ENCODE measurements at regions of chr5 and their contacts with region 1.

Region 1: DNA sequence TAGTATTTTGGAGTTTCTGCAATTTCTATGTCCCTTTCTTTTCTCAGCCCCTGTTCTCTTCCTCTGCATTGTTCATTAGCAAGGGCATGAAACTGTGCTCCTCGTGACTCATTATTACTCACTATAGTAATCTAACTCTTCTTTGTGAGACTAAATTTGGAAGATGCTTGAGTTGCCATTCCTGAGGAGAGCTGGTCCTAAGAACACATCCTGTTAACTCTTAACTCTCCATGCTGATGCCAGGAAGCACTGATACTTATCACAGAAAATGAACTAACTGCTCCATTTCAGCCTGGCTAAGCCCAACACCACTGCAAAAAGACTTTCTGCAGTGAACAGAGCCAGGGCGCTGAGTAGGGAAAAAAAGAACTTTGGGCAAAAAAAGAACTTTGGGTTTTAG is 10.6 kb upstream of the CSNK1A1 start:
- DNase-seq: peak; percentile 97
- H3K4me3 Mint-ChIP-seq: peak overlapping the region; percentile 50
- H3K27ac Mint-ChIP-seq: peak overlapping the region; percentile 82
- H3K4me1 Mint-ChIP-seq: peaks cover 38% of the 10 kb centered on the region
- H3K27me3 Mint-ChIP-seq: no peaks in the 10 kb centered on the region
- CTCF ChIP-seq: no peak

Region 2: GRCh38 chr5:149153751-149154610 is 407.9 kb before region 1 on chr5:
- CTCF ChIA-PET with region 1: no interaction called
- POLR2A ChIA-PET with region 1: no interaction called
- intact Hi-C with region 1: no loop called
- DNase-seq: peak; percentile 87
- H3K4me3 Mint-ChIP-seq: peak overlapping the region; percentile 3
- H3K27ac Mint-ChIP-seq: peak overlapping the region; percentile 81
- H3K4me1 Mint-ChIP-seq: peaks cover 61% of the 10 kb centered on the region
- H3K27me3 Mint-ChIP-seq: no peaks in the 10 kb centered on the region
- CTCF ChIP-seq: no peak

Region 3: DNA sequence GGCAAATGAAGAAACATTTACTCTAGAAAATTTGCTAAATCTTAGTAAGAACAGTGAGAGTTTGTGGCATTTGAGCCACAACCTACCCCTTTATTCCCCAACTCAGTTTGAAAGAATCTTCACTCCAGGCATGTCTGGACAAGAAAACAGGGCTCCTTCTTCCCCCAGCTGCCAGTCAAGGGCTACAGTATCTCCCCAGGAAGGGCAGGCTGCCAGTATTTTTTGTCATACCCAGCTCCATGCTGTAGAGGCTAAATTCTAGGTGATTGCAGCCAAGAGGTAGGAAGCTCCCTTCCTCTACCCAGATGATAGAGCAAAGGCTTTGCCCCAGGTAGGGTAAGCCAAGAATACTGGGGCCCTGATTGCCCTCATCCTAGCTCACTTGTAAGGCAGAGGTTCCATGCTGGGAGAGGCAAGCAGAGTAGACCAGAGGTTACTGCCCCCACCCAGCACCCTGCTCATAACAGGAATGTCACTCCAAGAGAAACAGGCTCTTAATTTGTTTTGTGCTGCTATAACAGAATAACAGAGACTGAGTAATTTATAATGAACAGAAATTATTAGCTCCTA is 236.6 kb before region 1 on chr5:
- CTCF ChIA-PET with region 1: interaction called, 9 read pairs
- POLR2A ChIA-PET with region 1: interaction called, 23 read pairs
- intact Hi-C with region 1: no loop called
- DNase-seq: peak; percentile 92
- H3K4me3 Mint-ChIP-seq: no peak overlapping the region
- H3K27ac Mint-ChIP-seq: peak overlapping the region; percentile 96
- H3K4me1 Mint-ChIP-seq: peaks cover 36% of the 10 kb centered on the region
- H3K27me3 Mint-ChIP-seq: no peaks in the 10 kb centered on the region
- CTCF ChIP-seq: no peak

Region 4: DNA sequence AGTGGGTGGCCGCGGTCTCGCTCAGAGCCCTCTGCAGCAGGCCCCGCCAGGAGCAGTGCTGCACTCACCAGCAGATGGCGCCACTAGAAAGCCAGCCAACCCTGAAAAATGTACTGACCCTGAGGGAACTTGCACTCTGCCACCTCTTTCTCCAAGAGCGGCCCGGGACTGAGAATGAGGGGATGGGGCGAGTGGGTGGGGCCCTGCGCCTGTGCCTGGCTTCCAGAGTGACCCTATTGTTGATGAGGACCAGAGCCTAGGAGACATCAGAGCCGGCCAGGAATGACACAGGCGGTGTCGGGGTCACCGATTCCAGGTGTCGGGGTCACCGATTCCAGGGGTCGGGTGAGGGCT is 179.9 kb before region 1 on chr5:
- CTCF ChIA-PET with region 1: interaction called, 54 read pairs
- POLR2A ChIA-PET with region 1: interaction called, 12 read pairs
- intact Hi-C with region 1: loop called (anchors 1 kb)
- DNase-seq: peak; percentile 78
- H3K4me3 Mint-ChIP-seq: no peak overlapping the region
- H3K27ac Mint-ChIP-seq: no peak overlapping the region
- H3K4me1 Mint-ChIP-seq: no peaks in the 10 kb centered on the region
- H3K27me3 Mint-ChIP-seq: no peaks in the 10 kb centered on the region
- CTCF ChIP-seq: peak; percentile 97

Region 5: GRCh38 chr5:149448831-149449714 is 112.8 kb before region 1 on chr5:
- CTCF ChIA-PET with region 1: interaction called, 44 read pairs
- POLR2A ChIA-PET with region 1: interaction called, 88 read pairs
- intact Hi-C with region 1: no loop called
- DNase-seq: peak; percentile 54
- H3K4me3 Mint-ChIP-seq: no peak overlapping the region
- H3K27ac Mint-ChIP-seq: peak overlapping the region; percentile 55
- H3K4me1 Mint-ChIP-seq: peaks cover 45% of the 10 kb centered on the region
- H3K27me3 Mint-ChIP-seq: no peaks in the 10 kb centered on the region
- CTCF ChIP-seq: no peak

Region 6: GRCh38 chr5:149503006-149503405 is 58.8 kb before region 1 on chr5:
- CTCF ChIA-PET with region 1: interaction called, 5 read pairs
- POLR2A ChIA-PET with region 1: interaction called, 10 read pairs
- intact Hi-C with region 1: no loop called
- DNase-seq: no peak
- H3K4me3 Mint-ChIP-seq: no peak overlapping the region
- H3K27ac Mint-ChIP-seq: no peak overlapping the region
- H3K4me1 Mint-ChIP-seq: no peaks in the 10 kb centered on the region
- H3K27me3 Mint-ChIP-seq: no peaks in the 10 kb centered on the region
- CTCF ChIP-seq: no peak

Region 7: DNA sequence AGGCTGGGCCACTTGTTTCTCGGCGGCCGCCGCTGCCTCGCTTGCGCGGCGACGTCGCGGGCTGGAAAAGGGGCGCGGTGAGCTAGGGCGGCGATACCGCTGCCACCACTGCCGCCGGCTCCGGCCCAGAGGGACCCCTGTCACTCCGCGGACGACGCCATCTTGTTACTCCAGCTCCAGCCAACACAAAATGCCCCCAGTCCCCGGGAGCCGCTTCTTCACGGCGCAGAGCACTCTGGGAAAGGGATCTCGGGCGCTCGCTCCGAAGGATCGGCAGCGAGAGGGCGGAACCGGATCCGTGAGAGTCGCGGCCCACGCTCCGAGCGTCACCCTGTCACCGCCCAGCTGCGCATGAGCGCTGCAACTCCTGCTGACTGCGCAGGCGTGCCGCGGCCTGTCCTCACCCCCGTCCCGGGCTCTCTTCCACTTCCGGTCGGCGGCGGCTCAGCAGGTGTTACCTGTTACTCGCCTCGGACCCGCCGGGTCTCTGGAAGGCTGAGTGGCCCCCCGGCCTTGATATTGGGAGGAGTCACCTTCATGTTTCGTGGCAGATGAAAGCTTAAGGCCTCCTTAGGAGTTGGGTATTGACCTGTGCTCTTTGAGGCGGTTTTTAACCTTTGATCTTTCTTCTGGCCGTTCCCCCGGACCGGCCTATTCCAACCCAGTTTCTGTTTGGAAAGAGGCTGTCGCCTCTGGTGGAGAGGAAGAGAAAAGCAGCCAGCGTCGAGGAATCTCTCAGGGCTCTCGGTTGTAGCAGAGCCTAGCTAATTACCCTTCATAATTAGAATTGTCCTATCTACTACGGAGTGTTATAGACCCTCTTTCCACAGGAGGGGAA is 10.4 kb before region 1 on chr5 and contains the start of gene CSNK1A1:
- CTCF ChIA-PET with region 1: interaction called, 109 read pairs
- POLR2A ChIA-PET with region 1: interaction called, 517 read pairs
- intact Hi-C with region 1: loop called (anchors 1 kb)
- DNase-seq: peak; percentile 100
- H3K4me3 Mint-ChIP-seq: peak within 1 kb of the TSS; percentile 89
- H3K27ac Mint-ChIP-seq: peak within 1 kb of the TSS; percentile 99
- H3K4me1 Mint-ChIP-seq: peaks cover 10% of the 10 kb centered on the region
- H3K27me3 Mint-ChIP-seq: no peaks in the 10 kb centered on the region
- CTCF ChIP-seq: peak; percentile 97
- total RNA-seq, gene CSNK1A1: 666 and 744 TPM in 2 replicates

Region 8: DNA sequence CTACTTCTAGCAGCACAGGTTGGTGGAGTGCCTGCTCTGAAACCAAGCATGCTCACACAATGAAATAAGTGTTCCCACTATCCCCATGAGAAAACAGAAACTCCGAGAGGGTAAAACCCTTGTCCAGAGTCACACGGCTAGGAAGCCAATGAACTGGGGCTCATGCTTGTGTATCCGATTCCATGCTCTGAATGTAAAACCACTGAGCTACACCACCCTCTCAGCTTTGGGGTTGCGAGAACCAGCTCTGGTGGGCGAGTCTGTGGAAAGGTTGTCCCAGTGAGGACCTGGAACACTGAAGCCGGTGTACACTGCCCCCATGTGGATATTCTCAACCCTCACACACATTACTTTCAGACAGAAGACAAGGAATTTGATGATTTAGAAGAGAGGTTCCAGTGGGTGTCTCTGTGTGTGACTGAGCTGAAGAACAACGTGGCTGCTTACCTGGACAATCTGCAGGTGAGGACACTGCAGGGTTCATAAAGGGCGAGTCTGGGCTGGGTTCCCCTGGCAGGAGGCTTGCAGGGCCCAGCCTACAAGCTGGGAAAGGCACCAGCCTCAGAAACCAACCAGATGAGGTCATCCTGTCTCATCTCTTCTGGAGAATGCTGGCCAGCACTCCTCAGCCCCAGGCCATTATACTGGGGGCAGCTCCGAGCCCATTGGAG is 56.9 kb after region 1 on chr5:
- CTCF ChIA-PET with region 1: interaction called, 43 read pairs
- POLR2A ChIA-PET with region 1: interaction called, 47 read pairs
- intact Hi-C with region 1: loop called (anchors 1 kb)
- DNase-seq: peak; percentile 86
- H3K4me3 Mint-ChIP-seq: no peak overlapping the region
- H3K27ac Mint-ChIP-seq: peak overlapping the region; percentile 28
- H3K4me1 Mint-ChIP-seq: peaks cover 16% of the 10 kb centered on the region
- H3K27me3 Mint-ChIP-seq: no peaks in the 10 kb centered on the region
- CTCF ChIP-seq: peak; percentile 92

Region 9: GRCh38 chr5:149667084-149667828 is 105.4 kb after region 1 on chr5:
- CTCF ChIA-PET with region 1: no interaction called
- POLR2A ChIA-PET with region 1: no interaction called
- intact Hi-C with region 1: no loop called
- DNase-seq: peak; percentile 66
- H3K4me3 Mint-ChIP-seq: no peak overlapping the region
- H3K27ac Mint-ChIP-seq: no peak overlapping the region
- H3K4me1 Mint-ChIP-seq: peaks cover 8% of the 10 kb centered on the region
- H3K27me3 Mint-ChIP-seq: no peaks in the 10 kb centered on the region
- CTCF ChIP-seq: peak; percentile 96

Measured in MCF 10A (cell line).